Natural killer cell (primary cell): ENCODE measurements at regions of chr3 and their contacts with region 1.

Region 1: GRCh38 chr3:171829841-171830517 is 13.2 kb upstream of the TMEM212 start:
- DNase-seq: peak in 1 of 2 donors; percentile 22
- ATAC-seq: no peak
- H3K4me3 ChIP-seq: no peak overlapping the region
- H3K4me3 Mint-ChIP-seq: no peak overlapping the region
- H3K27ac ChIP-seq: no peak overlapping the region
- H3K27ac Mint-ChIP-seq: no peak overlapping the region
- H3K4me1 ChIP-seq: peaks cover 9% of the 10 kb centered on the region
- H3K4me1 Mint-ChIP-seq: peaks cover 17 to 19% of the 10 kb centered on the region in 2 donors
- H3K27me3 ChIP-seq: no peaks in the 10 kb centered on the region
- H3K27me3 Mint-ChIP-seq: peaks cover 5 to 17% of the 10 kb centered on the region in 2 donors
- CTCF ChIP-seq: peak; percentile 19

Region 2: DNA sequence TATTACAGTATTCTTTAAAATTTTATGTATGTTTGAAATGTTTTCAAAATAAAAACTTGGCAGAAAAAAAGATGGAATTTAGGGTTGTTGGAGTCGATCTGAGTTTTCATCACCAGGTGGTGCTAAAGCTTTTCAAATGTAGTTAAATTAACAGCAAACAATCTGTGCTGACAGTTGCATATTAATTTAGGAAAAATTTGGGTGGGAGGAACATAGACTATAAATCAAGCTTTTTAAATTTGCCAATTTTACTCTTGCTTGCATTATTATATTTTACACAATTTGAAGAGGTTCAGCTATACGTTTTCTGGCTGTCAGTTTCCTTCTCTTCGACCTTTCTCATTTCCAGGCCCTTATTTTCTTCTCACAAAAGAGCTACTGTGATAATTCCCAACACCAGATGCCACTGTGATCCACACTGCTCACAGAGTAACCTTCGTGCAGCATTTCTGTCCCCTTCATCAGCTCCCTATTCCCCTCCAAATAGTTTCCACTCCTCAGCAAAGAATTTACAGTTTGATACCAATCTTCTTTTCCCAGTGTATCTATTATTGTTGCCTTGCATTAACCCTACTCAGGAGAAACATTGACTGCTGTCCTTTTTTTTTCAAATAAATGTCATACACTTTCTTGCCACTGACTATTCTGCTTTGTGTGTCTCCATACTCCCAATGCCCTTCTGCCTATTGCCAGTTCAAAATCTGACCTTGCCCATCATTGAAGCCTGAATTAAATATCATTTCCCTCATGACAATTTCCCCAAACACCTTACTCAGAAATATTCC is 868.2 kb before region 1 on chr3:
- intact Hi-C with region 1: loop called (anchors 10 kb)
- DNase-seq: peak in 1 of 2 donors; percentile 52
- ATAC-seq: no peak
- H3K4me3 ChIP-seq: no peak overlapping the region
- H3K4me3 Mint-ChIP-seq: no peak overlapping the region
- H3K27ac ChIP-seq: no peak overlapping the region
- H3K27ac Mint-ChIP-seq: no peak overlapping the region
- H3K4me1 ChIP-seq: no peaks in the 10 kb centered on the region
- H3K4me1 Mint-ChIP-seq: peaks cover 0 to 10% of the 10 kb centered on the region in 2 donors
- H3K27me3 ChIP-seq: peaks cover 2% of the 10 kb centered on the region
- H3K27me3 Mint-ChIP-seq: peaks cover 3 to 8% of the 10 kb centered on the region in 2 donors
- CTCF ChIP-seq: peak; percentile 64

Region 3: GRCh38 chr3:171614318-171614921 is 215.6 kb before region 1 on chr3:
- intact Hi-C with region 1: loop called (anchors 1 kb)
- DNase-seq: peak in 1 of 2 donors; percentile 15
- ATAC-seq: peak in 1 of 3 donors; percentile 44
- H3K4me3 ChIP-seq: no peak overlapping the region
- H3K4me3 Mint-ChIP-seq: no peak overlapping the region
- H3K27ac ChIP-seq: no peak overlapping the region
- H3K27ac Mint-ChIP-seq: no peak overlapping the region
- H3K4me1 ChIP-seq: no peaks in the 10 kb centered on the region
- H3K4me1 Mint-ChIP-seq: no peaks in the 10 kb centered on the region
- H3K27me3 ChIP-seq: no peaks in the 10 kb centered on the region
- H3K27me3 Mint-ChIP-seq: no peaks in the 10 kb centered on the region
- CTCF ChIP-seq: peak; percentile 20

Region 4: GRCh38 chr3:171646357-171647133 is 183.4 kb before region 1 on chr3:
- intact Hi-C with region 1: loop called (anchors 2 kb)
- DNase-seq: peak in 1 of 2 donors; percentile 39
- ATAC-seq: peak in 1 of 3 donors; percentile 29
- H3K4me3 ChIP-seq: no peak overlapping the region
- H3K4me3 Mint-ChIP-seq: no peak overlapping the region
- H3K27ac ChIP-seq: no peak overlapping the region
- H3K27ac Mint-ChIP-seq: no peak overlapping the region
- H3K4me1 ChIP-seq: no peaks in the 10 kb centered on the region
- H3K4me1 Mint-ChIP-seq: peaks cover 0 to 6% of the 10 kb centered on the region in 2 donors
- H3K27me3 ChIP-seq: no peaks in the 10 kb centered on the region
- H3K27me3 Mint-ChIP-seq: no peaks in the 10 kb centered on the region
- CTCF ChIP-seq: peak; percentile 50

Region 5: GRCh38 chr3:171703756-171704401 is 126.1 kb before region 1 on chr3:
- intact Hi-C with region 1: loop called (anchors 1 kb)
- DNase-seq: peak; percentile 22 to 44
- ATAC-seq: peak; percentile 48 to 81 (median 64)
- H3K4me3 ChIP-seq: no peak overlapping the region
- H3K4me3 Mint-ChIP-seq: no peak overlapping the region
- H3K27ac ChIP-seq: no peak overlapping the region
- H3K27ac Mint-ChIP-seq: no peak overlapping the region
- H3K4me1 ChIP-seq: no peaks in the 10 kb centered on the region
- H3K4me1 Mint-ChIP-seq: peaks cover 0 to 4% of the 10 kb centered on the region in 2 donors
- H3K27me3 ChIP-seq: no peaks in the 10 kb centered on the region
- H3K27me3 Mint-ChIP-seq: no peaks in the 10 kb centered on the region
- CTCF ChIP-seq: peak; percentile 65

Region 6: DNA sequence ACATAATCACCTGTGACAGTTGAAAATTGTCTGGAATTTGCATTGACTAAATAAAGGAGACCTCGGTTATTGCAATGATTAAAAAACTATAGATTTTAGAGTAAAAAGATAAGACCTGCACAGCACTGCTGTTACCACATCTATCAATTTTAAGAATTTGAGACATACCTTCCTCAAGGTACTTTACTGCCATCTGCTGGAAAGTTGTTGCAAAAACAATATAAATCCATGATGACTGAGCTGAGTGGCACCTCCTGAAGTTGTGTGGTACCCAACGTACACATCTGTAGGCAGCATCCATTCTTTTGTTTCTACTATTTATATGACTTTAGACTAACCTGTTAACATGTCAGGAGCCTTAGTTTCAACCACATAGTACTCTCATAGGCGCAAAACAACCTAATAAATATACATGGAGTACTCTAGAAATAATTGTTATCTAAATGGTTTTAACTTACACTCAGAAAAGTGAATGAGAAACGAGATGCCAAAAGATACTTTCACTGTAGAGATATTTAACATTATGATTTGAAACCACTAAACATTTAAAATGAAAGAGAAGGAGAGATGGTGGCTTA is 511.6 kb after region 1 on chr3:
- intact Hi-C with region 1: loop called (anchors 2 kb)
- DNase-seq: peak in 1 of 2 donors; percentile 77
- ATAC-seq: peak; percentile 75 to 85 (median 83)
- H3K4me3 ChIP-seq: no peak overlapping the region
- H3K4me3 Mint-ChIP-seq: no peak overlapping the region
- H3K27ac ChIP-seq: no peak overlapping the region
- H3K27ac Mint-ChIP-seq: peak overlapping the region in 1 of 2 donors; percentile 51
- H3K4me1 ChIP-seq: no peaks in the 10 kb centered on the region
- H3K4me1 Mint-ChIP-seq: peaks cover 5 to 9% of the 10 kb centered on the region in 2 donors
- H3K27me3 ChIP-seq: no peaks in the 10 kb centered on the region
- H3K27me3 Mint-ChIP-seq: no peaks in the 10 kb centered on the region
- CTCF ChIP-seq: peak; percentile 75